ENCODE measurements at regions of chr5 and their contacts with region 1.

Region 1: GRCh38 chr5:151811593-151812321 is 40.0 kb downstream of the G3BP1 start:
- DNase-seq: peak in 1 of 5 donors; percentile 39
- ATAC-seq: peak; percentile 80 to 92 (median 84)
- H3K4me3 ChIP-seq: no peak overlapping the region
- H3K27ac ChIP-seq: peak overlapping the region in 10 of 12 donors; percentile 2 to 62 (median 38)
- H3K4me1 ChIP-seq: peaks cover 0 to 39% (median 16%) of the 10 kb centered on the region in 12 donors
- H3K27me3 ChIP-seq: no peaks in the 10 kb centered on the region
- CTCF ChIP-seq: no peak
- POLR2A ChIP-seq: no peak

Region 2: GRCh38 chr5:151771259-151772028 is 40.3 kb before region 1 on chr5 and contains the start of gene G3BP1:
- intact Hi-C with region 1: loop called in 1 of 10 experiments (anchors 5 kb)
- DNase-seq: peak; percentile 100
- ATAC-seq: peak; percentile 93 to 97 (median 94)
- H3K4me3 ChIP-seq: peak within 1 kb of the TSS; percentile 56 to 93 (median 77)
- H3K27ac ChIP-seq: peak within 1 kb of the TSS; percentile 96 to 100 (median 98)
- H3K4me1 ChIP-seq: peaks cover 0 to 52% (median 42%) of the 10 kb centered on the region in 12 donors
- H3K27me3 ChIP-seq: no peaks in the 10 kb centered on the region
- CTCF ChIP-seq: peak; percentile 53 to 89 (median 67)
- POLR2A ChIP-seq: peak; percentile 91 to 99
- total RNA-seq, gene G3BP1: 64.5 to 133 (median 98.1) TPM

Region 3: DNA sequence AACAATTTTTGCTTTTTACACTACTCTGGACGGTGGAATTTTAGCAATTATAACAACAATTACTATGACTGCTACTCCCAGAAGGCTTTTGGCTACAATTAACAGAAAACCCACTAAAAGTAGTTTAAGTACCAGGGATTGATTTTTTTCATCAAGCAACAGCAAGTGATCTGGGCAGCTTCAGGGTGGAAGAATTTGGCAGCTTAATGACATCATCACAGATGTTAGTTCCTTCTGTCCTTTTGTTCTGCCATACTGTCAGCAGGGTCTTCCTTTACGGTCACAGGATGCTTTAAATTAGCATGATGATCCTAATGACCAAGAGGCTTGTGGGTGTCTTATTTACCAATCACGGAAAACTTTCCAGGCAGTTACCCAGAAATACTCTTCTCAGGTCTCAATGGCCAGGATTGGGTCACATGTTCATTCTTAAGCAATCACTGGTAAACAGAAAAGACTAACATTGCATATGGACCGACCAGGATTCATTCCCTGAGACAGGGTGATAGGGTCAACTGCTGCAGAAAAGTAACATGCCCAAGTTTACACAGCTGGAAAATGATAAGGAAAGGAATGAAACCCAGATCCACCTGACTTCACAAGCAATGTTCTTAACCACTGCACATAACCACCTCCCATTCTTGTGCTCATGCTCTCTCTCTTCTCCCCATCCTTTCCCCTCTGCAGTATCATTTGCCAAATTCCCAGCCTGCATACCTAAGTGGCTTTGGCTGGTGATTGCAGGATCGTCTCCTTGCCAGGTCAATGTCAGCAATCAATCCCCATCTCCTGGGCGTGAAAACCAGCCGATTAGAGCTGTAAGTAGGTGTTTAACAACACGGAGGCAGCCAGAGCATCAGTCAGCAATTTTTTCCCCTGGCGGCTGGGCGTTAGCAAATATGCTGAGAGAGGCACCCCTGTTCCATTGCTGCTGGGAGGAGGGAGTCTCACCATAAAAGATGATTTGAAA is 373.8 kb after region 1 on chr5:
- intact Hi-C with region 1: no loop called
- DNase-seq: peak; percentile 11 to 68 (median 54)
- ATAC-seq: peak; percentile 55 to 84 (median 64)
- H3K4me3 ChIP-seq: no peak overlapping the region
- H3K27ac ChIP-seq: peak overlapping the region in 1 of 12 donors; percentile 13
- H3K4me1 ChIP-seq: peaks cover 0 to 17% (median 4%) of the 10 kb centered on the region in 12 donors
- H3K27me3 ChIP-seq: no peaks in the 10 kb centered on the region
- CTCF ChIP-seq: no peak
- POLR2A ChIP-seq: no peak